ENCODE measurements at regions of chr20 and their contacts with region 1.

Region 1: GRCh38 chr20:25566821-25567220 is 18.5 kb downstream of the NINL start:
- DNase-seq: no peak
- H3K4me3 Mint-ChIP-seq: no peak overlapping the region
- H3K27ac Mint-ChIP-seq: peak overlapping the region; percentile 57
- H3K4me1 Mint-ChIP-seq: peaks cover 18% of the 10 kb centered on the region
- H3K27me3 Mint-ChIP-seq: no peaks in the 10 kb centered on the region

Region 2: GRCh38 chr20:25336561-25337422 is 230.0 kb before region 1 on chr20:
- CTCF ChIA-PET with region 1: no interaction called
- intact Hi-C with region 1: no loop called
- DNase-seq: no peak
- H3K4me3 Mint-ChIP-seq: no peak overlapping the region
- H3K27ac Mint-ChIP-seq: no peak overlapping the region
- H3K4me1 Mint-ChIP-seq: peaks cover 9% of the 10 kb centered on the region
- H3K27me3 Mint-ChIP-seq: no peaks in the 10 kb centered on the region

Region 3: GRCh38 chr20:25584905-25585704 is 18.3 kb after region 1 on chr20 and contains the start of gene NINL:
- CTCF ChIA-PET with region 1: interaction called, 3 read pairs
- intact Hi-C with region 1: loop called (anchors 1 kb)
- DNase-seq: peak; percentile 60
- H3K4me3 Mint-ChIP-seq: peak within 1 kb of the TSS; percentile 74
- H3K27ac Mint-ChIP-seq: no peak within 1 kb of the TSS
- H3K4me1 Mint-ChIP-seq: peaks cover 6% of the 10 kb centered on the region
- H3K27me3 Mint-ChIP-seq: peaks cover 4% of the 10 kb centered on the region
- total RNA-seq, gene NINL: 2.6 to 2.9 TPM

Measured in activated naive CD4-positive, alpha-beta T cell treated with anti-CD3 and anti-CD28 coated beads for 36 hours (primary cell).